ENCODE measurements at regions of chr19 and their contacts with region 1.

Region 1: GRCh38 chr19:51158474-51159129 is 16.5 kb downstream of the SIGLEC7 start:
- DNase-seq: no peak
- H3K4me3 ChIP-seq: no peak overlapping the region
- H3K27ac ChIP-seq: no peak overlapping the region
- H3K27me3 ChIP-seq: peaks cover 3% of the 10 kb centered on the region
- CTCF ChIP-seq: peak; percentile 58

Region 2: GRCh38 chr19:51147663-51148062 is 10.9 kb before region 1 on chr19:
- CTCF ChIA-PET with region 1: interaction called, 25 read pairs
- POLR2A ChIA-PET with region 1: no interaction called
- DNase-seq: no peak
- H3K4me3 ChIP-seq: no peak overlapping the region
- H3K27ac ChIP-seq: no peak overlapping the region
- H3K27me3 ChIP-seq: peaks cover 2% of the 10 kb centered on the region
- CTCF ChIP-seq: no peak